Aorta (tissue), 5 donors: ENCODE measurements at regions of chr4 and their contacts with region 1.

Region 1: DNA sequence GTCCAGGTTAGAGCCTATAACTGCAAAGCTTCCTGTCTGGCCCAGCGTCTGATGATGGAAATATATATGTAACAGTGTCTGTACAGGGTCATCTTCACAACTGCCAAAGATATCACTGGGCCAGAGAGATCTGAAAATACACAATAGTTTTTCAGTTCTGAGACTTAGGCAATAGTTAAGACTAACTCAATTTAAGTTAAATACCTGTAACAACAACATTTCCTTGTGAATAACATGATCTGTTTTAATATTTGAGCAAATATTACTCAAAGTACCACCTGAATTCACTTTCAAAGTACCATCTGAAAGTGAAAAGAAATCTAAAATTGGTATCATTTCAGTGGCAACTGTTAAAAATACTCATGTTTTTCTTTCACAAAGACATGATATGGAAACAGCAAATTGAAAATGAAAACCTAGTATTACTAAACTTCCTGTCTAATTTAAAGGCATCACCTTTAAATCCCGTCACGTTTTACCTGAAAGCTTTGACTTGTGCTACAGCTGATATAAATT is 9.6 kb downstream of the ZAR1 start:
- DNase-seq: no peak
- ATAC-seq: no peak
- H3K4me3 ChIP-seq: no peak overlapping the region
- H3K27ac ChIP-seq: no peak overlapping the region
- H3K4me1 ChIP-seq: no peaks in the 10 kb centered on the region
- H3K27me3 ChIP-seq: no peaks in the 10 kb centered on the region

Region 2: DNA sequence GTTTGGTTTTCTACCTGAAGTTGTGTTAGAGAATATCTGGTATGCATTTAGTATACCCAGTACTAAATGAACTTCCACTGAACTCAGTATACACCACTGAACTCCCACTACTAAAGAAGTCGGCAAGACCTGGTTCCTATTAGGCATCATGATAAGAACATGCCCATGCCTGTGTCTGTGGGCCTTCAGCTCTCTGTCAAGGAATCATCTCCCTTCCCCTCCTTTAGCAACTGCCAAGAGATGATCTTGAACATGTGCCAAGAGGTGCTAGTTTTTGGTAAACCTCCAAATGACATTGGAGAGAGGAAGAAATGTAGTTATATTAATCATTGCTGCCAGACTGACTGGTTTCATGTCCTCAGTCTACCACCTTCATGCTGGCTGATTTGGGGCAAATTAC is 901.3 kb before region 1 on chr4:
- intact Hi-C with region 1: no loop called
- DNase-seq: no peak
- ATAC-seq: no peak
- H3K4me3 ChIP-seq: no peak overlapping the region
- H3K27ac ChIP-seq: no peak overlapping the region
- H3K4me1 ChIP-seq: no peaks in the 10 kb centered on the region
- H3K27me3 ChIP-seq: no peaks in the 10 kb centered on the region

Region 3: DNA sequence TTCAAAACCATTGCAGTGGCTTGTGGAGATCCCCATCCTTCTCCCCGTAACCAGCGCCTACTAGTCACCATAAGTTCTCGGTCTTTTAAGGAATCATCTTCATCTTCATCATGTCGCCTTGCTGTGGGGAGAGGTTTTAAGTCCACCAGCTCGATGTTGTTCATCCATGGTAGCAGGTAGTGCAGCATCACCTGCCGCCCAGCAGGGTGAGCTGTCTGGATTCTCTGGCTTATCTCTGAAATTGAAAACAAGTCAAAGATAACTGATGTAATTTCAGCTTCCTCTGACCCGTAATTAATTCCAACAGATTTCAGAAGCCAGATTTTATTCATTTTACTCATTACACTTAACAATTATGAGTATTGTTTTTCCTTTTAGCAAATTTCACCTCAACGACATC is 57.9 kb after region 1 on chr4:
- intact Hi-C with region 1: loop called in 1 of 2 experiments (anchors 10 kb)
- DNase-seq: no peak
- ATAC-seq: no peak
- H3K4me3 ChIP-seq: no peak overlapping the region
- H3K27ac ChIP-seq: no peak overlapping the region
- H3K4me1 ChIP-seq: no peaks in the 10 kb centered on the region
- H3K27me3 ChIP-seq: no peaks in the 10 kb centered on the region